Psoas muscle (tissue), 8 donors: ENCODE measurements at regions of chr2 and their contacts with region 1.

Region 1: GRCh38 chr2:28452534-28453081 is 43.3 kb upstream of the PLB1 start:
- DNase-seq: peak; percentile 75 to 89
- ATAC-seq: peak; percentile 90 to 95 (median 94)
- H3K4me3 ChIP-seq: no peak overlapping the region
- H3K27ac ChIP-seq: no peak overlapping the region
- H3K4me1 ChIP-seq: no peaks in the 10 kb centered on the region
- H3K27me3 ChIP-seq: no peaks in the 10 kb centered on the region
- CTCF ChIP-seq: peak; percentile 90

Region 2: GRCh38 chr2:27703638-27704341 is 748.8 kb before region 1 on chr2:
- intact Hi-C with region 1: loop called (anchors 1 to 5 kb)
- DNase-seq: peak; percentile 82 to 88
- ATAC-seq: peak; percentile 43 to 54 (median 48)
- H3K4me3 ChIP-seq: no peak overlapping the region
- H3K27ac ChIP-seq: peak overlapping the region; percentile 90
- H3K4me1 ChIP-seq: peaks cover 48% of the 10 kb centered on the region
- H3K27me3 ChIP-seq: no peaks in the 10 kb centered on the region
- CTCF ChIP-seq: peak; percentile 93

Region 3: DNA sequence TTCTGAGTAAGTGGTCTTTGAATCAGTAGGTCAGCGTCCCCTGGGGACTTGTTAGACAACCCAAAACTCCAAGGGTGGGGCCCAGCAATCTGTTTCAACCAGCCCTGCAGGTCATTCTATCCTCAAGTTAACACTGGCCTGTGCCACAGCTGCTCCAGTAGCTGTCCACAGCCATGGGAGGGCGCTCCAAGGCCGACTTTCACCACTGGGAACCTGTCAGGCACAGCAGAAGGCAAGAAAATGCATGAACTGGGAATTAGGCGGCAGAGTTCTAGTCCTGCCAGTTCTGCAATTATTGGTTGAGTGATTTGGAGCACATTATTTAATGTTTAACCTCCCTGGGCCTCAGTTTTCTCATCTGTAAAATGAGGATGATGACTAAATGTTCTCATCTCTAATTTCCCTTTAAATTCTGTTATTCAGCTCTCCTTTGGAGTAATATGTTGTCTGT is 698.4 kb before region 1 on chr2:
- intact Hi-C with region 1: loop called (anchors 2 to 5 kb)
- DNase-seq: peak; percentile 81 to 90
- ATAC-seq: peak; percentile 88 to 95 (median 93)
- H3K4me3 ChIP-seq: no peak overlapping the region
- H3K27ac ChIP-seq: no peak overlapping the region
- H3K4me1 ChIP-seq: peaks cover 5% of the 10 kb centered on the region
- H3K27me3 ChIP-seq: no peaks in the 10 kb centered on the region
- CTCF ChIP-seq: peak; percentile 84

Region 4: GRCh38 chr2:28224648-28225472 is 227.7 kb before region 1 on chr2:
- intact Hi-C with region 1: no loop called
- DNase-seq: no peak
- ATAC-seq: peak in 1 of 4 donors; percentile 27
- H3K4me3 ChIP-seq: no peak overlapping the region
- H3K27ac ChIP-seq: no peak overlapping the region
- H3K4me1 ChIP-seq: peaks cover 5% of the 10 kb centered on the region
- H3K27me3 ChIP-seq: no peaks in the 10 kb centered on the region
- CTCF ChIP-seq: no peak